Right cardiac atrium (tissue), 5 donors: ENCODE measurements at regions of chr12 and their contacts with region 1.

Region 1: DNA sequence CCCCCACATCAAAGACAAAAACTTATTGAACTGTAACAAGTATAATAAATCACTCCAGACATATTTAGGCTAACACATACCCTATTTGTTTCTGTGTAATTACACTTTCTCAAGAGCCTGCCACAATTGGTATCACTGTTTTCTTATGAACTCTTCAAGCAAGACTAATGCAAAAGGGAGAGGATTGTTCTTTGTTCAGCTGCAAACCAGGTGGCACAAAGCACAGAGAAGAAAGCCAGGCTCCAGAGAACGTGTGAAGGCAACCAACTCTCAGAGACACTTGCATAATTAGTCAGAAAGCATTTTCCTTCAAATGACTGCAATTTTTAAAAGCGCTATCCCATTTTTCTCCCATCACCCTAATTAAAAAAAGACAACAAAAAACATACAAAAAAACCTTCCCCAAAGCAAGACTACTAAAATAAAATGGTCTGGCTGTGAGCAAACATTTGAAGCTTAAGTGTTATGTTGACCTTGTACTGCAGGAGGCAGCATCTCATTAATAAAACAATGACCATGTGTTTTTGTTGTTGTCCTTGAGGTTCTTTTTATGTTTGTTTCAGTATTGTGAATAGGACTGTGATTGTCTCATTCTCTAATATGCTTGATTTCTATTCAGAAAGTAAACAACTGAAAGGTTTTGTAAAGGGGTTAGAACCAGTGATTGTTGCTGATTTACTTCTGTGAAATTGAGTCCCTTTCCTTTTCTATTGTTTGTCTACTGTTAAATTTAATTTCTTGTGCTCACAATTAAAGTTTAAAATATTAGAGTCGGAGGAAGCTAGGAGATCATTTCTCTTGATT is 452.7 kb upstream of the PDE3A start:
- DNase-seq: no peak
- ATAC-seq: peak; percentile 52 to 57
- H3K4me3 ChIP-seq: no peak overlapping the region
- H3K27ac ChIP-seq: no peak overlapping the region
- H3K4me1 ChIP-seq: no peaks in the 10 kb centered on the region
- H3K27me3 ChIP-seq: no peaks in the 10 kb centered on the region

Region 2: GRCh38 chr12:19700969-19701368 is 214.6 kb before region 1 on chr12:
- intact Hi-C with region 1: no loop called
- DNase-seq: no peak
- ATAC-seq: no peak
- H3K4me3 ChIP-seq: no peak overlapping the region
- H3K27ac ChIP-seq: no peak overlapping the region
- H3K4me1 ChIP-seq: no peaks in the 10 kb centered on the region
- H3K27me3 ChIP-seq: no peaks in the 10 kb centered on the region

Region 3: GRCh38 chr12:19779393-19780056 is 136.1 kb before region 1 on chr12:
- intact Hi-C with region 1: loop called in 1 of 4 experiments (anchors 10 kb)
- DNase-seq: peak; percentile 36 to 80 (median 78)
- ATAC-seq: peak; percentile 81 to 86
- H3K4me3 ChIP-seq: no peak overlapping the region
- H3K27ac ChIP-seq: peak overlapping the region; percentile 49
- H3K4me1 ChIP-seq: peaks cover 2% of the 10 kb centered on the region
- H3K27me3 ChIP-seq: no peaks in the 10 kb centered on the region

Region 4: DNA sequence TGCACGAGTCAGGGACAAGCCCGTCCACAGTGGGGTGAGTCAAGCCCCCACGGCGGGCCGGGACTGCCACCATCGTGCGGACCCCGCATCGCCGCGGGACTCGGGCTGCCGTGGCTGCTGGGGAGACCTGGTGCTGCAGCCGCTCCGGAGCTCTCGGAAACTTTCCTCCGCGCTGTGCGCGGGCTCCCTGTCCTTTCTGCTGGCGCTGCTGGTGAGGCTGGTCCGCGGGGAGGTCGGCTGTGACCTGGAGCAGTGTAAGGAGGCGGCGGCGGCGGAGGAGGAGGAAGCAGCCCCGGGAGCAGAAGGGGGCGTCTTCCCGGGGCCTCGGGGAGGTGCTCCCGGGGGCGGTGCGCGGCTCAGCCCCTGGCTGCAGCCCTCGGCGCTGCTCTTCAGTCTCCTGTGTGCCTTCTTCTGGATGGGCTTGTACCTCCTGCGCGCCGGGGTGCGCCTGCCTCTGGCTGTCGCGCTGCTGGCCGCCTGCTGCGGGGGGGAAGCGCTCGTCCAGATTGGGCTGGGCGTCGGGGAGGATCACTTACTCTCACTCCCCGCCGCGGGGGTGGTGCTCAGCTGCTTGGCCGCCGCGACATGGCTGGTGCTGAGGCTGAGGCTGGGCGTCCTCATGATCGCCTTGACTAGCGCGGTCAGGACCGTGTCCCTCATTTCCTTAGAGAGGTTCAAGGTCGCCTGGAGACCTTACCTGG is 453.9 kb after region 1 on chr12:
- intact Hi-C with region 1: loop called in 1 of 4 experiments (anchors 10 kb)
- DNase-seq: peak; percentile 87 to 95 (median 94)
- ATAC-seq: peak; percentile 87
- H3K4me3 ChIP-seq: peak overlapping the region; percentile 58
- H3K27ac ChIP-seq: peak overlapping the region; percentile 90
- H3K4me1 ChIP-seq: no peaks in the 10 kb centered on the region
- H3K27me3 ChIP-seq: no peaks in the 10 kb centered on the region

Region 5: GRCh38 chr12:20601668-20602280 is 686.2 kb after region 1 on chr12:
- intact Hi-C with region 1: loop called in 1 of 4 experiments (anchors 10 kb)
- DNase-seq: no peak
- ATAC-seq: peak in 1 of 2 donors; percentile 29
- H3K4me3 ChIP-seq: peak overlapping the region; percentile 15
- H3K27ac ChIP-seq: no peak overlapping the region
- H3K4me1 ChIP-seq: no peaks in the 10 kb centered on the region
- H3K27me3 ChIP-seq: no peaks in the 10 kb centered on the region